Naive thymus-derived CD4-positive, alpha-beta T cell (primary cell): ENCODE measurements at regions of chr2 and their contacts with region 1.

Region 1: DNA sequence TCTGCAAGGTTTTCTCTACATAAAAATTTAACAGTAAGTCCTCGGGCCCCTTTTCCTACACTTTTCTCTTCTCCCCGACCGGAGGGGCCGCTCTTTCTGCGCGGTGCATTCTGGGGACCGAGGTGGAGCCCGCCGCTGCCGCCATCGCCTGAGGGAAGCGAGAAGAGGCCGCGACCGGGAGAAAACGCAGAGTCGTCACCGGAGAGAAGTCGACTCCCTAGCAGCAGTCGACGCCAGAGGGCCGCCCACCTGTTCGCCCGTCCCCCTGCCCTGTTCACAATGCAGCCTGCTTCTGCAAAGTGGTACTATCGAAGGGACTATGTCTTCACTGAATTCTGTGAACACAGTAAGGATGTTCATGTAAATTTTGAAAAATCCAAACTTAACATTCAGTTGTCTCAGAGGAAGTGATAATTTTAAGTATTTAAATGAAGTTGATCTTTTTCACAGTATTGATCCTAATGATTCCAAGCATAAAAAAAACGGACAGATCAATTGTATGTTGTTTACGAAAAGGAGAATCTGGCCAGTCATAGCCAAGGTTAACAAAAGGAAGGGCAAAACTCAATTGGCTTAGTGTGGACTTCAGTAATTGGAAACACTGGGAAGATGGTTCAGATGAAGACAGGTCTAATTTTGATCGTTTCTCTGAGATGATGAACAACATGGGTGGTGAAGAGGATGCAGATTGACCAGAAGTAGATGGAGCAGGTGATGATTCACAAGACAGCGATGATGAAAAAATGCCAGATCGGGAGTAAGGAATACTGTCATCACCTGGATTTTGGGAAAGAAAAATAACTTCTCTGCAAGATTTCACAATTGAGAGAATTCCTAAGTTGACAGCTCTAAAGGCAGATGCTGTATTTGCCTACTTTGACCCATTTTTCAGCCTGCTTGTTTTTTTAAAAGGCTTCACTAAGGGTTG is 55.8 kb downstream of the ASXL2 start:
- DNase-seq: peak; percentile 43 to 70 (median 61)
- ATAC-seq: peak; percentile 89
- H3K4me3 ChIP-seq: peak overlapping the region; percentile 44
- H3K4me3 Mint-ChIP-seq: peak overlapping the region; percentile 71 to 87 (median 82)
- H3K27ac ChIP-seq: peak overlapping the region; percentile 54
- H3K27ac Mint-ChIP-seq: peak overlapping the region; percentile 63 to 95 (median 84)
- H3K4me1 ChIP-seq: peaks cover 18 to 38% of the 10 kb centered on the region in 2 donors
- H3K4me1 Mint-ChIP-seq: peaks cover 44 to 85% (median 58%) of the 10 kb centered on the region in 7 donors
- H3K27me3 ChIP-seq: no peaks in the 10 kb centered on the region
- H3K27me3 Mint-ChIP-seq: no peaks in the 10 kb centered on the region

Region 2: DNA sequence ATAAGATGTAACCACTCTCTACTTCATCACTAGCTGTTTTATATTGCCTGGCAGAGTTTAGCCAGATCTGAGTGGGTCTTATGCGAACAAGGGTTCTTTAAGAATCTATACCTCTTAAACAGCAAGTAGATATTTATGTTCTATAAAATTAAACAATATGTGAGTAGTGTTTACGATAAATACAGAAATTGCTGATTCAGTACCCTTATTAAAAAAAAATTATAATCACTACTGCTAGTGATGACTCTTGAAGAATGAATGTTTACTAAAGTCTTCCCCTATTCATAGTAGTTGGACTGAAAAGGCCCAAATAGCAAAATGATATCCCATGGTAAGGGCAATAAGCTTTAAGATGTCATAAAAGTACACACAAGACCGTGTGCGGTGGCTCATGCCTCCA is 50.4 kb before region 1 on chr2:
- CTCF ChIA-PET with region 1: no interaction called
- POLR2A ChIA-PET with region 1: no interaction called
- intact Hi-C with region 1: loop called in 1 of 2 experiments (anchors 10 kb)
- DNase-seq: no peak
- ATAC-seq: no peak
- H3K4me3 ChIP-seq: no peak overlapping the region
- H3K4me3 Mint-ChIP-seq: no peak overlapping the region
- H3K27ac ChIP-seq: no peak overlapping the region
- H3K27ac Mint-ChIP-seq: no peak overlapping the region
- H3K4me1 ChIP-seq: no peaks in the 10 kb centered on the region
- H3K4me1 Mint-ChIP-seq: peaks cover under 1 to 17% (median 15%) of the 10 kb centered on the region in 7 donors
- H3K27me3 ChIP-seq: no peaks in the 10 kb centered on the region
- H3K27me3 Mint-ChIP-seq: no peaks in the 10 kb centered on the region

Region 3: GRCh38 chr2:25794544-25795276 is 27.7 kb before region 1 on chr2:
- CTCF ChIA-PET with region 1: interaction called, 3 read pairs
- POLR2A ChIA-PET with region 1: interaction called, 3 read pairs
- intact Hi-C with region 1: loop called (anchors 1 to 2 kb)
- DNase-seq: peak in 6 of 9 donors; percentile 33 to 61 (median 47)
- ATAC-seq: peak; percentile 90
- H3K4me3 ChIP-seq: peak overlapping the region; percentile 23
- H3K4me3 Mint-ChIP-seq: peak overlapping the region; percentile 68 to 92 (median 86)
- H3K27ac ChIP-seq: peak overlapping the region; percentile 63
- H3K27ac Mint-ChIP-seq: peak overlapping the region; percentile 87 to 97 (median 95)
- H3K4me1 ChIP-seq: peaks cover 43 to 51% of the 10 kb centered on the region in 2 donors
- H3K4me1 Mint-ChIP-seq: peaks cover 48 to 95% (median 86%) of the 10 kb centered on the region in 7 donors
- H3K27me3 ChIP-seq: no peaks in the 10 kb centered on the region
- H3K27me3 Mint-ChIP-seq: no peaks in the 10 kb centered on the region